H1 (cell line): ENCODE measurements at regions of chr2 and their contacts with region 1.

Region 1: GRCh38 chr2:178320011-178320585 is 125.8 kb downstream of the OSBPL6 start:
- DNase-seq: no peak
- H3K4me3 ChIP-seq: no peak overlapping the region
- H3K27ac ChIP-seq: no peak overlapping the region
- H3K4me1 ChIP-seq: no peaks in the 10 kb centered on the region
- H3K27me3 ChIP-seq: no peaks in the 10 kb centered on the region
- CTCF ChIP-seq: no peak
- EP300 ChIP-seq: no peak
- POLR2A ChIP-seq: no peak
- RAD21 ChIP-seq: no peak

Region 2: GRCh38 chr2:178306352-178307073 is 13.6 kb before region 1 on chr2:
- CTCF ChIA-PET with region 1: interaction called, 12 read pairs
- POLR2A ChIA-PET with region 1: no interaction called
- DNase-seq: peak; percentile 15 to 72
- H3K4me3 ChIP-seq: no peak overlapping the region
- H3K27ac ChIP-seq: no peak overlapping the region
- H3K4me1 ChIP-seq: no peaks in the 10 kb centered on the region; a peak in 1 of 7 replicates
- H3K27me3 ChIP-seq: no peaks in the 10 kb centered on the region
- CTCF ChIP-seq: peak; percentile 70 to 86 (median 75)
- EP300 ChIP-seq: no peak
- POLR2A ChIP-seq: no peak
- RAD21 ChIP-seq: peak; percentile 77 to 81